Caco-2 (cell line): ENCODE measurements at regions of chr5 and their contacts with region 1.

Region 1: DNA sequence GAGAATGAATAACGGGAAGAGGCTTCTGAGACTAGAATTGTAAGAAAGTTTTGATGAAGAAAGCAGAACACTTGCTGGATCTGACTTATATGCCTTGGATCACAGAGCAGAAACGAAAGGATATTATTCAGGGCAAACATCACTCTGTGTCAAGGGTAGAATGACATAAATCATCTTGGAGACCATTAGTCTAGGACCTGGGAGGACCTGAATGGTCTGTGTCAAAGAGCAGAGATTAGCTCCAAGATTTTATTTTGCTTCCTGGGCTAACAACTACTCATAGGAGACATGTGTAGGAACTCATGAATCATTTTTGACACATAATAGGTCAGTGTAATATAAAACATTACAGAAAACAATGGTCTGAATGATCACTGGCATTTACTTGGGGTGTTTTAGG is 417.9 kb downstream of the SLCO4C1 start:
- DNase-seq: no peak
- H3K4me3 ChIP-seq: no peak overlapping the region
- H3K4me3 Mint-ChIP-seq: no peak overlapping the region
- H3K27ac Mint-ChIP-seq: no peak overlapping the region
- H3K4me1 ChIP-seq: no peaks in the 10 kb centered on the region
- H3K4me1 Mint-ChIP-seq: no peaks in the 10 kb centered on the region
- H3K27me3 ChIP-seq: no peaks in the 10 kb centered on the region
- H3K27me3 Mint-ChIP-seq: no peaks in the 10 kb centered on the region
- CTCF ChIP-seq: no peak

Region 2: DNA sequence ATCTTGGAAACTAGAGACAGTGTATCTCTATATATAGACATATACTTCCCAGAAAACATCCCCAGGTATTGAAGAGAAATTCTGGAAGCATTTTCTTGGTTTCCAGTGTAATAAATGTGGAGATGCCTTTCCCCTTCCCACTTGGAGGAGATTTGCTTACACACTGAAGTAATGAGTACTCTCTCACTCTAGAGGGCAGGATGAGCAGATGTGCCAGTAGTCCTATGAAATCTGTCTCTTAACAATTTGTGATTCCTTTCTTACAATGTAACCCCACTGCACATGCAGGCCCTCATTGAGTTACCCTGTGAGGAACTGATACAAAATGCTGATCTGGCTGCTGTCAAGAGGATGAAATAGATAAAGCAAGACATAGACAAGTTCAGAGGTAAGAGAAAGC is 149.3 kb before region 1 on chr5:
- CTCF ChIA-PET with region 1: no interaction called
- POLR2A ChIA-PET with region 1: no interaction called
- intact Hi-C with region 1: loop called (anchors 10 kb)
- DNase-seq: peak in 1 of 2 experiments; percentile 13
- H3K4me3 ChIP-seq: no peak overlapping the region
- H3K4me3 Mint-ChIP-seq: no peak overlapping the region
- H3K27ac Mint-ChIP-seq: no peak overlapping the region
- H3K4me1 ChIP-seq: no peaks in the 10 kb centered on the region
- H3K4me1 Mint-ChIP-seq: no peaks in the 10 kb centered on the region
- H3K27me3 ChIP-seq: no peaks in the 10 kb centered on the region
- H3K27me3 Mint-ChIP-seq: no peaks in the 10 kb centered on the region
- CTCF ChIP-seq: peak; percentile 15 to 28

Region 3: GRCh38 chr5:101929628-101930027 is 51.4 kb after region 1 on chr5:
- CTCF ChIA-PET with region 1: no interaction called
- POLR2A ChIA-PET with region 1: no interaction called
- intact Hi-C with region 1: loop called (anchors 1 kb)
- DNase-seq: no peak
- H3K4me3 ChIP-seq: no peak overlapping the region
- H3K4me3 Mint-ChIP-seq: no peak overlapping the region
- H3K27ac Mint-ChIP-seq: no peak overlapping the region
- H3K4me1 ChIP-seq: peaks cover 5% of the 10 kb centered on the region; the same call in 1 of the 2 replicates
- H3K4me1 Mint-ChIP-seq: peaks cover 9% of the 10 kb centered on the region
- H3K27me3 ChIP-seq: no peaks in the 10 kb centered on the region
- H3K27me3 Mint-ChIP-seq: no peaks in the 10 kb centered on the region
- CTCF ChIP-seq: no peak

Region 4: DNA sequence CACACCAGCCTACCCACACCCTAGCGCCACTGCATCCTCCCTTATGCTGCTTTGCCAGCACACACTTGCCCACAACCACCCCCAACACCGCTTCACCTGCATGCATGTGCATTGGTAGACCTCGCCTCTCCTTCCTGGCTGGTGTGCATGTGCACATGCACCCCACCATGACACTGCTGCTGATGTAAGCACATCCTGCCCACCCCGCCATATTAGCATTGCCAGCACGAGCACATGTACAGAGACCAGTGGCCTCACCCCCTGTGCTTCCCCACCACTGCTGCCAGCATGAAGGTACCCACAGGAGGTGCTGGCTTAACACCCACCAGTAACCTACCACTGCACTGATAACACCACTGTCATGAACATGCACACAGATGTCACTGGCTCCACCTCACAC is 199.7 kb after region 1 on chr5:
- CTCF ChIA-PET with region 1: no interaction called
- POLR2A ChIA-PET with region 1: no interaction called
- intact Hi-C with region 1: no loop called
- DNase-seq: no peak
- H3K4me3 ChIP-seq: no peak overlapping the region
- H3K4me3 Mint-ChIP-seq: no peak overlapping the region
- H3K27ac Mint-ChIP-seq: no peak overlapping the region
- H3K4me1 ChIP-seq: no peaks in the 10 kb centered on the region; the same call in 1 of the 2 replicates
- H3K4me1 Mint-ChIP-seq: peaks cover 10% of the 10 kb centered on the region
- H3K27me3 ChIP-seq: no peaks in the 10 kb centered on the region; the same call in 1 of the 2 replicates
- H3K27me3 Mint-ChIP-seq: no peaks in the 10 kb centered on the region
- CTCF ChIP-seq: no peak

Region 5: DNA sequence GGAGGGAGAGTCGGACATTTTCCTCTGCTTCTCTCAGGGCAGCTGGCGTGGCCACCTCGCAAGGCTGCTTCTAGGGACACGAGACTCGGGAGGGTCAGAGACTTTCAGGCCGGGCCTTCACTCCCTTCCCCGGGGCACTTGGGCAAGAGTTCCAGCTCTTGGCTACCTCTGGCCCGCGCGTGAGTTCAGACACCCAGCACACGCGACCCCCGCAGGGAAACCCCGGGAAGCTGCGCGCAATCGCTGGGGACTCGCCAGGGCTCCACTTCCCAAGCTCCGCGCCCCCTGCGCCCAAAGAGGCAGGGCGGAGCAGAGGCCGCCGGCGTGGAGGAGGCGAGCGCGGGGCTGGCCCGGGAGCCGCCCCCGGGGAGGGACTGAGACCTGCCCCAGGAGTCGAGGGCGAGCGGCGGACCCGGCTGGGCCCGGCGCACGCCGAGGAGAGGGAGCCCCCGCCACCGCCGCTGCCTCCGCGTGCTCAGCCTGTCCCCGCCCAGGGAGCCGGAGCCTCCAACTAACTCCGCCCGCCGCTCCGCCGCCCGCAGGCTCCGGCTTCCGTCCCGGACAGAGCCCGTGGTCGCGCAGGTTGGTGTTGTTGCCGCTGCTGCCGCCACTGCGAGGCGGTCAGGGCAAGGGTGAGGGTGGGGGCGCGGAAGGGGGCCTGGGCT is 876.7 kb after region 1 on chr5 and contains the start of gene PAM:
- CTCF ChIA-PET with region 1: no interaction called
- POLR2A ChIA-PET with region 1: no interaction called
- intact Hi-C with region 1: no loop called
- DNase-seq: peak; percentile 82 to 85
- H3K4me3 ChIP-seq: peak within 1 kb of the TSS; percentile 73
- H3K4me3 Mint-ChIP-seq: peak within 1 kb of the TSS; percentile 97
- H3K27ac Mint-ChIP-seq: peak within 1 kb of the TSS; percentile 93
- H3K4me1 ChIP-seq: peaks cover 3% of the 10 kb centered on the region; the same call in 1 of the 2 replicates
- H3K4me1 Mint-ChIP-seq: no peaks in the 10 kb centered on the region
- H3K27me3 ChIP-seq: no peaks in the 10 kb centered on the region
- H3K27me3 Mint-ChIP-seq: no peaks in the 10 kb centered on the region
- CTCF ChIP-seq: no peak
- total RNA-seq, gene PAM: 48.0 and 50.1 TPM in 2 replicates

Region 6: DNA sequence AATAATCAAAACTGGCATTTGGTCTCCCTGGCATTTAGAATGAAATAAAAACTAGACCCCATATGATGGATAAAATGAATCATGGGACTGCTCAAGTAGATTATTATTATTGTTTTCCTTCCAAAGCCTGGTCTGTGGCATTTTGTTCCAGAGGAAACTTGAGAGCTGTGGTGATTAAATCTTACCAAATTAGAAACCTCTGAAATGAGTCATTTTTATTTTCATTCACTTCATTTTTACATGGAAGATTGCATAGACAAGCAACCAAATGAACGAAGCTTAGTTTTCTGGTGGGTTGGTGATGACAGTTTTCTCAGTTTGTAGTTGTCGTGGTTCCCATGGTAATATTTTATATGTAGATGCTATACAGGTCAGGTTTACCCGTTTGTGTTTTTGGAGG is 900.3 kb after region 1 on chr5:
- CTCF ChIA-PET with region 1: no interaction called
- POLR2A ChIA-PET with region 1: no interaction called
- intact Hi-C with region 1: no loop called
- DNase-seq: no peak
- H3K4me3 ChIP-seq: no peak overlapping the region
- H3K4me3 Mint-ChIP-seq: no peak overlapping the region
- H3K27ac Mint-ChIP-seq: no peak overlapping the region
- H3K4me1 ChIP-seq: no peaks in the 10 kb centered on the region
- H3K4me1 Mint-ChIP-seq: no peaks in the 10 kb centered on the region
- H3K27me3 ChIP-seq: no peaks in the 10 kb centered on the region
- H3K27me3 Mint-ChIP-seq: no peaks in the 10 kb centered on the region
- CTCF ChIP-seq: no peak